ENCODE measurements at regions of chr9 and their contacts with region 1.

Region 1: GRCh38 chr9:78235756-78236538 is at the start of gene CEP78:
- DNase-seq: peak; percentile 86
- H3K4me3 Mint-ChIP-seq: no peak within 1 kb of the TSS
- H3K27ac Mint-ChIP-seq: peak within 1 kb of the TSS; percentile 87
- H3K4me1 Mint-ChIP-seq: peaks cover 35% of the 10 kb centered on the region
- H3K27me3 Mint-ChIP-seq: no peaks in the 10 kb centered on the region
- total RNA-seq, gene CEP78: 33.7 and 36.5 TPM in 2 replicates

Region 2: DNA sequence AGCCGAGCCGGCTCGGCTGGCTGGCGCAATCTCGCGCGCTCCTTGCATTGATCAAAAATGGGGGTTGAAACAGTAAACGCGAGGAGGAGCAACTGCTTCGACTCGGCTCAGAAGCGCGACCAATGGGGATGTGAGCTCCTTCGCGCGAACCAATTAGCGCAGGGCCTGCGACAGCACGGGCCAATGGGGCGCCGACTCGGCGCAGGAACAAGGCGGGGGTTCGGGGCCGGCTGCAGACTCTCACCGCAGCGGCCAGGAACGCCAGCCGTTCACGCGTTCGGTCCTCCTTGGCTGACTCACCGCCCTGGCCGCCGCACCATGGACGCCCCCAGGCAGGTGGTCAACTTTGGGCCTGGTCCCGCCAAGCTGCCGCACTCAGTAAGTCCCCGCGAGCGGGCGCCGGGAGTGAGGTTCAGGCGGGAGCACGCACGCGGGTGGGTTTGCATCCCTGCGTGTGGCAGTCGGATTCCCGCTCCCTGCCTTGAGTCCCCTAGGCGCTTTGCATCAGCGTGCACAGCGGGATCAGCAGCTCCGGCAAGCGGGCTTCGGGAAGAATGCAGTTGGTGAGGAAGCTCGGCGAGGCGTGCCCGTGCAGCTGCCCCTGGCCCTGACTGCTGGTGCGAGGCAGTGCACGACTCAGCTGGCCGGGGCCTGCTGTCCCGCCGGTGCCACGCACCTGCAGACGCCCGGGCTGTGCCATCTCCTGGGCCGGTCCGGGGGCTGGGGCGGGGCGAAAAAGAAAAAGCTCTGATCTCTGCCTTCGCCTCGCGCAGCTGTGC is 61.1 kb after region 1 on chr9 and contains the start of gene PSAT1:
- intact Hi-C with region 1: loop called (anchors 2 kb)
- DNase-seq: peak; percentile 92
- H3K4me3 Mint-ChIP-seq: peak within 1 kb of the TSS; percentile 92
- H3K27ac Mint-ChIP-seq: peak within 1 kb of the TSS; percentile 93
- H3K4me1 Mint-ChIP-seq: peaks cover 40% of the 10 kb centered on the region
- H3K27me3 Mint-ChIP-seq: no peaks in the 10 kb centered on the region
- total RNA-seq, gene PSAT1: 66.5 and 67.6 TPM in 2 replicates

Region 3: DNA sequence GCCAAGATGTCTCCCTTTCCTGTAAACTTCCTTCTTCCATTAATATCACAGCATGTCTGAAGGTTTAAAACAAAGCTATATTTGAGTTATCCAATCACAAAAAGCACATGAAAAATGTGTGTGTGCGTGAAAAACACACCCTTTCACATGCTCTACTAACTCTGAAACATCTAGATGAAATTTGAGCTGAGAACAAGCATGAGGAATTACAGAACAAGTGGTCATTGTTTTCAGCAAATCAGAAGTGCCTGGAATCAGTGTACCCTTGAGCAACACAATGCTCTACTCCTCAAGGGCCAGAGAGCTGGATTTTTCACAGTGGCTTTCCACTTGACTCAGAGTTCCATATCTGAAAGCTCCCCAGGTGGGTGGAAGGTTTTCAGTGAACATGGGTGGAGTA is 316.9 kb after region 1 on chr9:
- intact Hi-C with region 1: no loop called
- DNase-seq: no peak
- H3K4me3 Mint-ChIP-seq: no peak overlapping the region
- H3K27ac Mint-ChIP-seq: no peak overlapping the region
- H3K4me1 Mint-ChIP-seq: no peaks in the 10 kb centered on the region
- H3K27me3 Mint-ChIP-seq: no peaks in the 10 kb centered on the region

Measured in activated T-helper 2 cell treated with anti-CD3 and anti-CD28 coated beads, Interferon-gamma antibody, Interleukin-2, Interleukin-4, amounts not matched to agents 10 μg/mL and 5 μg/mL and 100 μg/mL, durations not matched to agents 14 hours and 24 hours and 36 hours (primary cell).